Right ventricle myocardium inferior (tissue), 1 donor: ENCODE measurements at regions of chr7 and their contacts with region 1.

Region 1: GRCh38 chr7:74289018-74289658 is at the start of gene CLIP2:
- DNase-seq: peak; percentile 91
- ATAC-seq: peak; percentile 89
- total RNA-seq, gene CLIP2: 7.5 TPM

Region 2: DNA sequence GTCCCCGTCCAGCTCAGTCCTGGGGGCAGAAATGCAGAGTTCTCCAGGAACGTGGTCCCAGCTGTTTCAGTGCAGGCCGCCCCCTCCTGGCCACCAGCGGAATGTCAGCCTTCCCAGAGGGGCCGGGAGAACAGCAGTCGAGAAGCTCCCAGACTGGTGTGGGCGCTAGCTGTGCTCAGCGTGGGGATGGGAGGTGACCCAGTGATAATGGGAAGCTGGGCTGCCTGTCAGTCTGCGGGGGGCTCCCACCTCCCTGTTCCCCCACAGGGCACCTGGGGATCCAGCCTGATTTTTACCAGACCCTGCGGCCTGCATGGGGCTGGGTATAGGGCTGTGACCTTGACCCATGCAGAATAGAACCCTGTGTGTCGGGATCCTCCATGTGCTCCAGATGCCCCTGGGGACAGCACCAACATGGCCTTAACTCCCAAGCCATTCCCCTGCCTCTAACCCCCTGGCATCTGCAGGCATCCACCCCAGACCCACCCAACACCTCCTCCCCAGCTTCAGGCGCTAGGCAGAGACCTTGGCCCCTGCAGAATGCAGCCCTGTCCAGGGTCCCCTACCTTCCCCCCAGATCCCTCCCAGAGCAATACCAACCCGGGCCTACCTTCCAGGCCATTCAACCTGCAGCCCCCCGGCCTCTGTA is 262.1 kb before region 1 on chr7:
- intact Hi-C with region 1: no loop called
- DNase-seq: peak; percentile 90
- ATAC-seq: peak; percentile 63

Region 3: DNA sequence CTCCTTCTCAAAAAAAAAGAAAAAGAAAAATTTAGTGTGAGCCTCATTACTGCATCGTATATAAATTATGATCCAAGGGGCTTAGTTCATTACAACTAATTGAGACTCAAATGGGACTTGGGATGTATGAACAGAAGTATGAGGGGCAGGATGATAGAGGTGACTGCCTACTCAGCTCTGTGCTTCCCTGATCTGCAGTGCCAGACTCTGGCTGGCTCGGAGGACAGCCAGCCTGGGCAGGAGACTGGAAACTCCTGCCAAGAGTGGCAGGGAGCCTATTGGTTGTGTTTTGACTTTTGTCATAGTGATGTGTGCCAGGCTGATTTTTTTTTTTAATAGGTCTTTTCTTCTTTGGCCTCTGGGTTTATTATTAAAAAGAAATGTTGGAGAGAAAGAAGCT is 90.8 kb after region 1 on chr7:
- intact Hi-C with region 1: loop called (anchors 5 kb)
- DNase-seq: no peak
- ATAC-seq: peak; percentile 93